ENCODE measurements at regions of chr10 and their contacts with region 1.

Region 1: DNA sequence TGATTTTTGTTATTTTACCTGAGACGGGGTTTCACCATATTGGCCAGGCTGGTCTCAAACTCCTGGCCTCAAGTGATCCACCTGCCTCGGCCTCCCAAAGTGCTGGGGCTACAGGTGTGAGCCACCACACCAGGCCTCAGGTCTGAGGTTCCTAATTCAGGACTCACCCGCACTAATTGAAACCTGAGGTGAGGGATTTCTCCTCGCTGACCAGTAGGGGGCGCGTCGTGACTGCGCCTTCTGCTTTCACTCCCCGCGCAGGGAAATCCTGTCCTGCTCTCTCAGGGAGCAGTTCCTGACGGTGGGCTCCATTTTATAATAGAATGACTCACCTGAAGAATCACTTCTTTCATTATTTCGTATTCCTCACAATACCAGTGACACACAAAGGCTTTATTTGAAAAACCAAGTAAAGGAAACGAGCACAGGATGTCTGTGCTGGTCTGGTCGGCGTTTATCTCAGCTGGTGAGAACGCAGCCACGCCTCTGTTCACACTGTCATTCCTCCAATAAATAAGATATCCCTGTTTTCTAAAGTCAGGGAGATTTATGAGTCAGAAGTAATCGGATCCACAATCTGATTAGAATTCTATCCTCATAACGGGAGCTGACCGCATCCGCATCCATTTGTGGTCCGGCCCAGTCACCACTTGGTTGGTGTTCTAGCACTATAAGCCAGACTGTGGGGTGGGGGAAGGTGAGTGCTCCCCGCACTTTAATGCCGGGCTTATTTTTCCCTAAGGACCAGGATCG is 35.4 kb downstream of the BAG3 start:
- DNase-seq: peak; percentile 92
- H3K4me3 Mint-ChIP-seq: peak overlapping the region; percentile 59
- H3K27ac Mint-ChIP-seq: peak overlapping the region; percentile 42
- H3K4me1 Mint-ChIP-seq: peaks cover 23% of the 10 kb centered on the region
- H3K27me3 Mint-ChIP-seq: peaks cover 2% of the 10 kb centered on the region

Region 2: GRCh38 chr10:119555178-119555784 is 131.3 kb before region 1 on chr10:
- intact Hi-C with region 1: no loop called
- DNase-seq: no peak
- H3K4me3 Mint-ChIP-seq: no peak overlapping the region
- H3K27ac Mint-ChIP-seq: no peak overlapping the region
- H3K4me1 Mint-ChIP-seq: no peaks in the 10 kb centered on the region
- H3K27me3 Mint-ChIP-seq: peaks cover 17% of the 10 kb centered on the region

Region 3: DNA sequence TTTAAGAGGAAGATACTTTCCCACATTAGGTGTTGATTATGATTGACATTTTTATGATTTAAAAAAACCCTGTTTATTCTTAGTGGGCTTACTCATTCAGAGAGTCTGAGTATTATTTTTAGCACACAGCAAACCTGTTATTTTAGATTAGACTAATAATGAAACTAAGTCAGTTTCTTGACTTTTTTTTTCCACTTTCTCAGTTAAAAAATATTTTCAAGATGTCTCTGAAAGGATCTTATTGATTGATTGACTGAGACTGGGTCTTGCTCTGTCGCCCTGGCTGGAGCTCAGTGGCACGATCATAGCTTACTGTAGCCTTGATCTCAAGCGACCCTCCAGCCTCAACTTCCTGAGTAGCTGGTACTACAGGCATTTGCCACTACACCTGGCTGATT is 18.8 kb after region 1 on chr10:
- intact Hi-C with region 1: loop called (anchors 1 kb)
- DNase-seq: peak; percentile 72
- H3K4me3 Mint-ChIP-seq: peak overlapping the region; percentile 75
- H3K27ac Mint-ChIP-seq: peak overlapping the region; percentile 99
- H3K4me1 Mint-ChIP-seq: peaks cover 56% of the 10 kb centered on the region
- H3K27me3 Mint-ChIP-seq: no peaks in the 10 kb centered on the region

Region 4: GRCh38 chr10:119725828-119726675 is 39.4 kb after region 1 on chr10 and contains the start of gene INPP5F:
- intact Hi-C with region 1: loop called (anchors 1 kb)
- DNase-seq: peak; percentile 100
- H3K4me3 Mint-ChIP-seq: peak within 1 kb of the TSS; percentile 91
- H3K27ac Mint-ChIP-seq: peak within 1 kb of the TSS; percentile 86
- H3K4me1 Mint-ChIP-seq: peaks cover 37% of the 10 kb centered on the region
- H3K27me3 Mint-ChIP-seq: no peaks in the 10 kb centered on the region
- total RNA-seq, gene INPP5F: 18.1 and 18.3 TPM in 2 replicates

Region 5: DNA sequence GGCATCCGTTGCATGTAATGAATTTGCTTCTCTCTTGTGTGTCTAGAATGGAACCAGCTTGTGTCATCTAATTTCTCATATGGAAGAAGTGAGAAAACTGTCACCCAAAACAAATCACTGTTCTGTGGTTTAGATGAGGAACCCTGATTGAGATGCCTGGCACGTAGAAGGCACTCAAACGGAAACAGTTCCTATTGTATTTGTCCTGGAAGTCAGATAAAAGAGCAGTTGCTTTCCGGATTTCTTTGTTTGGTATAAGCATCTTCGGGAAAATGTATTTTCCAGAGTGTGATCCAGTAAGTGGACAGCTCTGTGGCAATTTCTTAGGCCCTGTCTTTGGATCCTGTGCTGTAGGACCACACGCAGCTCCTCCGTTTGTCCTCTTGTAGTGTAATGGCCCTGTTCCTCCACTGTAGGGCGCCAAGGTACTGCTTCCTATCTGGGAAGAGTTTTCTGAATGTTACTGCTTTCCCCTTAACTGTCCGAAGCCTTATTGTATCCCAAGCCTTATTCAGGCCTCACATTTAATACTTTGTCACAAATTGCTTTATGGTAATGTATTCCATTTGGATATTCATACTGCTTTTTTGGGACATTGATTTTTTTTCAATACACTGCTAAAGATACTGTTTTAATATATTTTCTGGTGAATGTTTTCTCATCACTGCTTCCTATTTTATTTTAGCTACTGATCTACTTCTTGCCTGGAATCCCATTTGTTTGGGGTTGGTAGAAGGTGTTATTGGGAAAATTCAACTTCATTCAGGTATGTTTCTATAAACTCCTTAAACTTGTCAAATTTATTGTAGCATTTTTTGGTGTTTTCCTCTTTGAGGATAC is 64.0 kb after region 1 on chr10:
- intact Hi-C with region 1: loop called (anchors 1 kb)
- DNase-seq: peak; percentile 87
- H3K4me3 Mint-ChIP-seq: no peak overlapping the region
- H3K27ac Mint-ChIP-seq: no peak overlapping the region
- H3K4me1 Mint-ChIP-seq: peaks cover 2% of the 10 kb centered on the region
- H3K27me3 Mint-ChIP-seq: no peaks in the 10 kb centered on the region

Region 6: DNA sequence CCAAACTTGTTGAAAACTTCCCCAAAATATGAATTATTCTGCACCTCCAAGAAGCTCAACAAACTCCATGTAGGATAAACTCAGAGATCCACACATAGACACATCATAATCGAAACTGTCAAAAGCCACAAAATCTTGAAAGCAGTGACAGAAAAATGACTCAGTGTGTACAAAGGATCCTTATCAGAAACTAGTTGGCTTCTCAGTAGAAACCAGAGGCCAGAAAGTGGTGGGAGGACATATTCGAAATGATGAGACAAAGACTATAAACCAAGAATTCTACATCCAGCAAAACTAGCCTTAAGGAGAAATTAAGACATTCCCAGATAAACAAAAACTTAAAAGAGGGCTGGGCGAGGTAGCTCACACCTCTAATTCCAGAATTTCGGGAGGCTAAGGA is 147.6 kb after region 1 on chr10:
- intact Hi-C with region 1: loop called (anchors 1 kb)
- DNase-seq: no peak
- H3K4me3 Mint-ChIP-seq: peak overlapping the region; percentile 24
- H3K27ac Mint-ChIP-seq: peak overlapping the region; percentile 72
- H3K4me1 Mint-ChIP-seq: peaks cover 22% of the 10 kb centered on the region
- H3K27me3 Mint-ChIP-seq: no peaks in the 10 kb centered on the region

Region 7: GRCh38 chr10:119859420-119860258 is 173.0 kb after region 1 on chr10:
- intact Hi-C with region 1: loop called (anchors 1 kb)
- DNase-seq: peak; percentile 59
- H3K4me3 Mint-ChIP-seq: no peak overlapping the region
- H3K27ac Mint-ChIP-seq: peak overlapping the region; percentile 4
- H3K4me1 Mint-ChIP-seq: peaks cover 28% of the 10 kb centered on the region
- H3K27me3 Mint-ChIP-seq: no peaks in the 10 kb centered on the region

Region 8: GRCh38 chr10:120336911-120337540 is 650.4 kb after region 1 on chr10:
- intact Hi-C with region 1: loop called (anchors 5 kb)
- DNase-seq: peak; percentile 84
- H3K4me3 Mint-ChIP-seq: no peak overlapping the region
- H3K27ac Mint-ChIP-seq: no peak overlapping the region
- H3K4me1 Mint-ChIP-seq: no peaks in the 10 kb centered on the region
- H3K27me3 Mint-ChIP-seq: peaks cover 5% of the 10 kb centered on the region